IMR-90 (cell line): ENCODE measurements at regions of chr12 and their contacts with region 1.

Region 1: DNA sequence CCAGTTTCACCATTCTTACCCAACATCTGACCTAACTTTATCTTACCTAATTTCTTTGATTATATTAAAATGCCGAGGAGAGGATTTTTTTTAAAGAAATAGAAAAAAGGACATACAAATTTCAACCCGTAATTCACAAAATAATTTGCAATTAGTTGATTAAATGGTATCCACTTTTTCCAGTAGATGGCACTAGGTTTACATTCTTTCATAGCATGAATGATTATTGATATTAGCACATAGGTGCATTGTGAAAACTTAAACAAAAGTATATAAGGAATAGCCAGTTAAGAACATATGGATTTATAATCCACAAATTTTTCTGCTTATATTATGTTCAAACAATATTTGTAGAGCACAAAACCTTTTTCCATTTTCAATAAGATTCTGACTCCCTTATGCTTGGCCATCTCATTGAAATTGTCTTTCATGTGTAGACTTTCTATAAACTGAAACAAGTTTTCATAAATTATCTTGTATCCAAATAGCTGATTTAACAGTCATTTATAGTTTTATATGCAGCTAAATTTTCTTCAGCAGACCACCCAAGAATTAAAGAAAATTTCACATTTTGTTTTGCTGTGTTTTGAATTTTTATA is 35.3 kb downstream of the MSRB3 start:
- DNase-seq: peak; percentile 47
- ATAC-seq: peak; percentile 32; the same call in 1 of the 2 replicates
- H3K4me3 ChIP-seq: no peak overlapping the region
- H3K27ac ChIP-seq: no peak overlapping the region
- H3K4me1 ChIP-seq: 0 out of 2 replicates have a peak, but pooled peaks cover 1% of the 10 kb centered on the region
- H3K27me3 ChIP-seq: no peaks in the 10 kb centered on the region
- CTCF ChIP-seq: peak; percentile 62
- POLR2A ChIP-seq: no peak
- RAD21 ChIP-seq: peak; percentile 74

Region 2: GRCh38 chr12:65881965-65882413 is 568.2 kb after region 1 on chr12:
- CTCF ChIA-PET with region 1: no interaction called
- POLR2A ChIA-PET with region 1: no interaction called
- dilution Hi-C with region 1: no loop called
- in situ Hi-C with region 1: no loop called
- intact Hi-C with region 1: loop called (anchors 5 kb)
- DNase-seq: peak; percentile 38
- ATAC-seq: no peak
- H3K4me3 ChIP-seq: no peak overlapping the region
- H3K27ac ChIP-seq: peak overlapping the region; percentile 70; the same call in 1 of the 2 replicates
- H3K4me1 ChIP-seq: peaks cover 29% of the 10 kb centered on the region
- H3K27me3 ChIP-seq: no peaks in the 10 kb centered on the region
- CTCF ChIP-seq: 0 out of 2 replicates have a peak, but pooled peaks have one; percentile 1
- POLR2A ChIP-seq: no peak
- RAD21 ChIP-seq: no peak